IMR-90 (cell line): ENCODE measurements at regions of chr14 and their contacts with region 1.

Region 1: DNA sequence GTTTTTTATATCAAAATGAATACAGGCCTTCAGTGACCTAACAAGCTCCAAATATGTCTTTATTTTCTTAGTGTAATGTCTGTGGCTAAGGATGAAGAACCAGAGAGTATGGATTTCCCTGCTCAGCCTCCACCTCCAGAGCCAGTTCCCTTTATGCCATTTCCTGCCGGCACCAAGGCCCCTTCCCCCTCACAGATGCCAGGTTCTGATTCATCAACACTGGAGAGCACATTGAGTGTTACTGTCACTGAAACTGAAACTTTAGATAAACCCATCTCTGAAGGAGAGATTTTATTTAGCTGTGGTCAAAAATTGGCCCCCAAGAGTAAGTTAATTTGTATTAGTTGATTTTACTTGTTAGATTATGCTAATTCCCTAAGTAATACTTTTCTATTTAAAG is 61.0 kb downstream of the KIAA0586 start:
- DNase-seq: peak; percentile 50
- ATAC-seq: peak; percentile 65; the same call in 1 of the 2 replicates
- H3K4me3 ChIP-seq: no peak overlapping the region
- H3K27ac ChIP-seq: peak overlapping the region; percentile 40; the same call in 1 of the 2 replicates
- H3K4me1 ChIP-seq: peaks cover 2% of the 10 kb centered on the region; the same call in 1 of the 2 replicates
- H3K27me3 ChIP-seq: no peaks in the 10 kb centered on the region
- CTCF ChIP-seq: no peak
- POLR2A ChIP-seq: no peak
- RAD21 ChIP-seq: no peak

Region 2: DNA sequence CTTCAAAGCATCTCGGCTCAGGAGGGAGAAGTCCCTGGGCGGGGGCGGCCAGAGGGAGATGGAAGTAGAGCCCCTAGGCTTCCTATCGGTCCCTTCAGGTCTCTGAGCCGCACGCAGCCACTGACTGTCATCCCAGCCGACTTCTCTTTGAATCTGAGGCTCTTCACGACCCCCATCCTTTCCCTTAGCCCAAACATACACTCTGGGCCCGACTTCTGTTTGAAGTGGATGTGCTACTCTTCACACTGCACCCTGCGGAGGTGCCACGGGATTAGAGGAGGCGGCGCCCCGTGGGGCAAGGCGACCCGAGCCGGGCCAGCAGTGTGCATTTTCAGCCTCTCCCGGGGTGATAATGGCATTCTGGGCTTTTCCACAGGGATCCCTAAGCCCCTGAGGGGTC is 143.2 kb after region 1 on chr14:
- CTCF ChIA-PET with region 1: no interaction called
- POLR2A ChIA-PET with region 1: no interaction called
- dilution Hi-C with region 1: no loop called
- in situ Hi-C with region 1: no loop called
- intact Hi-C with region 1: no loop called
- DNase-seq: no peak
- ATAC-seq: no peak
- H3K4me3 ChIP-seq: no peak overlapping the region
- H3K27ac ChIP-seq: no peak overlapping the region
- H3K4me1 ChIP-seq: peaks cover 1% of the 10 kb centered on the region; the same call in 1 of the 2 replicates
- H3K27me3 ChIP-seq: no peaks in the 10 kb centered on the region; the same call in 1 of the 2 replicates
- CTCF ChIP-seq: no peak
- POLR2A ChIP-seq: no peak
- RAD21 ChIP-seq: no peak

Region 3: DNA sequence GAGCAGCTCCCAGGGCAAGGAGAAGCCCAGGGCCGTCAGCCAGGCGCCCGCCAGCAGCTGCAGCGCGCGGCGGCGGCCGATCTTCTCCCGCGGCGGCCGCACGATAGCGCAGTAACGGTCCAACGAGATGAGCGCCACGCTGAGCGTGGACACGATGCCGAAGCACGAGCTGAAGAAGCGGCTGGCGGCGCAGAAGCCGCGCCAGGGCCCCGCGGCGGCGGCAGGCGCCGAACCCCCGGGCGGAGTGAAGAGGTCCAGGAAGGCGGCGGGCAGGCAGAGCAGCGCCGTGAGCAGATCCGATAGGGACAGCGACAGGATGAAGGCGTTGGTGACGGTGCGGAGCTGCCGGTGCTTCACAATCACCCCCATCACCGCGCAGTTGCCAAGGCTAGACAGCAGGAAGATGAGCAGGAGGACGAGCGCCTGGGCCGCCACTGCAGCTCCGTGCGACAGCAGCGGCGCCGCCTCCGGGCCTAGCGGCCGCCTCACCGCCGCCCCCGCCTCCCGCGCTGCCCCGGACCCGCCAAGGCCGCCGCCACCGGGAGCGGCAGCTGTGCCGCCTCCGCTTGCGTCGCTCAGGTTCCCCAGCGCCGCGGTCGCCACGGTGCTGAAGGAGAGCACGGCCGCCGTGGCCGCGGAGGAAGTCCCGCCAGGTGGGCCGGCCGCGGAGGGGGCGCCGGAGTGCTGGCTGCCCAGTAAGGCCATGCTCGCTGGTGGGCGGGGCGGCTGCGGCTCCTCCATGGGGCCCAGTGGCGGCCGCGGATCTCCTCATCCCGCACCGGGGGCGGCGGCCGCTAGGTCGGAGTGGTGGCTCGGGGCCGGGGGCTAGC is 976.2 kb after region 1 on chr14:
- CTCF ChIA-PET with region 1: no interaction called
- POLR2A ChIA-PET with region 1: no interaction called
- dilution Hi-C with region 1: no loop called
- in situ Hi-C with region 1: loop called (anchors 25 kb)
- intact Hi-C with region 1: no loop called
- DNase-seq: peak; percentile 56
- ATAC-seq: peak; percentile 86
- H3K4me3 ChIP-seq: peak overlapping the region; percentile 38
- H3K27ac ChIP-seq: peak overlapping the region; percentile 24; the same call in 1 of the 2 replicates
- H3K4me1 ChIP-seq: peaks cover 6% of the 10 kb centered on the region
- H3K27me3 ChIP-seq: no peaks in the 10 kb centered on the region
- CTCF ChIP-seq: no peak
- POLR2A ChIP-seq: no peak
- RAD21 ChIP-seq: no peak

Region 4: DNA sequence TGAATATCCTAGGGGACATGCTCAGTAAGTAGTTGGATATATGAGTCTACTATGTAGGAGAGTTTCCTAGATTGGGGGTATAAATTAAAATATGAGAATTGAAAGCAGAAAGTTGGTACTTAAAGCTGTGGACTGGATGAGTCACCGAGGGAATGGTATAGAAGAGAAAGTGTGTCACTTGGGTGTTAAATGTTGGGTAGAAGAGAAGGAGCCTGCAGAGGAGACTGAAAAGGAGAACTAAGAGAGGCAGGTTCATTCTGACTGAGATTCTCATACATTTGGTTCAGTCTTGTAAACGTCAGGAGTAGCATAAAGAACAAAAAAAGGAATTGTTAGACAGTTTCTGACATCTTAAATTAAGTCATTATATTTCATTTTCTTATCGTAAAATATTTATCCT is 1451.3 kb after region 1 on chr14:
- CTCF ChIA-PET with region 1: no interaction called
- POLR2A ChIA-PET with region 1: no interaction called
- dilution Hi-C with region 1: no loop called
- in situ Hi-C with region 1: no loop called
- intact Hi-C with region 1: no loop called
- DNase-seq: no peak
- ATAC-seq: no peak
- H3K4me3 ChIP-seq: no peak overlapping the region
- H3K27ac ChIP-seq: no peak overlapping the region
- H3K4me1 ChIP-seq: no peaks in the 10 kb centered on the region
- H3K27me3 ChIP-seq: no peaks in the 10 kb centered on the region
- CTCF ChIP-seq: no peak
- POLR2A ChIP-seq: no peak
- RAD21 ChIP-seq: no peak